Mammary epithelial cell (primary cell): ENCODE measurements at regions of chr6 and their contacts with region 1.

Region 1: DNA sequence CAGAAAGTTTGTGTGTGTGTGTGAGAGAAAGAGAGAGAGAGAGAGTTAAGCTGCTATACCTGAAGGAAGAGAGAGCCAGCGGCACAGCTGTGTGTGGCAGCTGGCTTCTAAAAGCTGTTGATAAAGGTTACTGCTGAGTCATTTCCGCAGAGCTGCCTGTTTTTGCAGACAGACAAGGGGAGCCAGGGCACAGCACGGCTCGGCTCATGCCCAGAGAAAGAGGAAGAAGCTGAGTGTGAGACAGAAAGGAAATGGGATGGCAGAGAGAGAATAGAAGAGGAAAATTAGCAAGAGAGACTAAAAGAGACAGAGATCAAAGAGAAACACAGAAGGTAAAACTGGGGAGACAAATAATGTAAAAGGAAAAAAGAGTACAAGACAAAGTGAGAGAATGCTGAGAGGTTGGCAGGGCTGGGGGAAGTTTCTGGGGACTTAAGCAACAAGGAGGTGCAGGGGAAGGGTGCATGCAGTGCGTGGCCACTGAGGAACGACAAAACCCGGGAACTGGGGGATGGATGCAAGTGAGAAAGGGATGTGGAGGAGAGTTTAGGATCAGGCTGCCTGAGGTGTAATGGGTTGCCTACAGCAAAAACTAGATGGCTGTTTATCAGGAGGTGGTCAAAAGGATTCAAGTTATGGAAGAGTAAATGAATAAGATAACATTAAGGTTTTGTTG is 22.7 kb downstream of the HLA-A start:
- DNase-seq: peak; percentile 84
- H3K4me3 ChIP-seq: peak overlapping the region; percentile 32 to 61 (median 45)
- H3K27ac ChIP-seq: peak overlapping the region; percentile 66
- H3K4me1 ChIP-seq: peaks cover 39% of the 10 kb centered on the region
- H3K27me3 ChIP-seq: no peaks in the 10 kb centered on the region
- CTCF ChIP-seq: no peak

Region 2: DNA sequence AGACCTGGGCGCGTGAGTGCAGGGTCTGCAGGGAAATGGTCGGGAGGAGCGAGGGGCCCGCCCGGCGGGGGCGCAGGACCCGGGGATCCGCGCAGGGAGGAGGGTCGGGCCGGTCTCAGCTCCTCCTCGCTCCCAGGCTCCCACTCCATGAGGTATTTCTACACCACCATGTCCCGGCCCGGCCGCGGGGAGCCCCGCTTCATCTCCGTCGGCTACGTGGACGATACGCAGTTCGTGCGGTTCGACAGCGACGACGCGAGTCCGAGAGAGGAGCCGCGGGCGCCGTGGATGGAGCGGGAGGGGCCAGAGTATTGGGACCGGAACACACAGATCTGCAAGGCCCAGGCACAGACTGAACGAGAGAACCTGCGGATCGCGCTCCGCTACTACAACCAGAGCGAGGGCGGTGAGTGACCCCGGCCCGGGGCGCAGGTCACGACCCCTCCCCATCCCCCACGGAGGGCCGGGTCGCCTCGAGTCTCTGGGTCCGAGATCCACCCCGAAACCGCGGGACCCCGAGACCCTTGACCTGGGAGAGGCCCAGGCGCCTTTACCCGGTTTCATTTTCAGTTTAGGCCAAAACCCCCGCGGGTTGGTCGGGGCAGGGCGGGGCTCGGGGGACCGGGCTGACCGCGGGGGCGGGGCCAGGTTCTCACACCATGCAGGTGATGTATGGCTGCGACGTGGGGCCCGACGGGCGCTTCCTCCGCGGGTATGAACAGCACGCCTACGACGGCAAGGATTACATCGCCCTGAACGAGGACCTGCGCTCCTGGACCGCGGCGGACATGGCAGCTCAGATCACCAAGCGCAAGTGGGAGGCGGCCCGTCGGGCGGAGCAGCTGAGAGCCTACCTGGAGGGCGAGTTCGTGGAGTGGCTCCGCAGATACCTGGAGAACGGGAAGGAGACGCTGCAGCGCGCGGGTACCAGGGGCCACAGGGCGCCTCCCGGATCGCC is 76.9 kb before region 1 on chr6:
- CTCF ChIA-PET with region 1: no interaction called
- dilution Hi-C with region 1: no loop called
- in situ Hi-C with region 1: no loop called
- intact Hi-C with region 1: loop called (anchors 5 kb)
- DNase-seq: peak; percentile 61
- H3K4me3 ChIP-seq: peak overlapping the region; percentile 64 to 71 (median 67)
- H3K27ac ChIP-seq: peak overlapping the region; percentile 89
- H3K4me1 ChIP-seq: peaks cover 7% of the 10 kb centered on the region
- H3K27me3 ChIP-seq: no peaks in the 10 kb centered on the region
- CTCF ChIP-seq: no peak

Region 3: GRCh38 chr6:29916741-29917140 is 48.3 kb before region 1 on chr6:
- CTCF ChIA-PET with region 1: interaction called, 11 read pairs
- dilution Hi-C with region 1: no loop called
- in situ Hi-C with region 1: no loop called
- intact Hi-C with region 1: no loop called
- DNase-seq: no peak
- H3K4me3 ChIP-seq: no peak overlapping the region
- H3K27ac ChIP-seq: no peak overlapping the region
- H3K4me1 ChIP-seq: no peaks in the 10 kb centered on the region
- H3K27me3 ChIP-seq: no peaks in the 10 kb centered on the region
- CTCF ChIP-seq: no peak

Region 4: DNA sequence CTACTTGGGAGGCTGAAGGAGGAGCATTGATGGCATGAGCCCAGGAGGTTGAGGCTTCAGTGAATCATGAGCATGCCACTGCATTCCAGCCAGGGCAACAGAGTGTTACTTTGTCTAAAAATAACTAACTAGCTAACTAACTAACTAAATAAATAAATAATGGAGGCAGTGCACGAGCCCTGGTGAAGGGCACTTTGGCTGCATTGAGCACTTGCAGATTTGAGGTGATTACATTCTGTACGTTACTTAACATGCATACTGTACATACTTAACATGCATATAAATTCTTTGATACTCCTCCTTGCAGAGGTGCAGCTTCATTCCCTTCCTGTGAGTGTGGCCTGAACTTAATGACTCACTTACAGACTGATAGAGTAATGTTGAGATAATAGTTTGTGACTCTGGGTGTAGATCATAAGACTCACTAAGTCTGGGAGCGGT is 12.0 kb before region 1 on chr6:
- CTCF ChIA-PET with region 1: interaction called, 8 read pairs
- dilution Hi-C with region 1: no loop called
- in situ Hi-C with region 1: no loop called
- intact Hi-C with region 1: loop called (anchors 1 kb)
- DNase-seq: peak; percentile 91
- H3K4me3 ChIP-seq: no peak overlapping the region
- H3K27ac ChIP-seq: no peak overlapping the region
- H3K4me1 ChIP-seq: peaks cover 2% of the 10 kb centered on the region
- H3K27me3 ChIP-seq: no peaks in the 10 kb centered on the region
- CTCF ChIP-seq: no peak

Region 5: DNA sequence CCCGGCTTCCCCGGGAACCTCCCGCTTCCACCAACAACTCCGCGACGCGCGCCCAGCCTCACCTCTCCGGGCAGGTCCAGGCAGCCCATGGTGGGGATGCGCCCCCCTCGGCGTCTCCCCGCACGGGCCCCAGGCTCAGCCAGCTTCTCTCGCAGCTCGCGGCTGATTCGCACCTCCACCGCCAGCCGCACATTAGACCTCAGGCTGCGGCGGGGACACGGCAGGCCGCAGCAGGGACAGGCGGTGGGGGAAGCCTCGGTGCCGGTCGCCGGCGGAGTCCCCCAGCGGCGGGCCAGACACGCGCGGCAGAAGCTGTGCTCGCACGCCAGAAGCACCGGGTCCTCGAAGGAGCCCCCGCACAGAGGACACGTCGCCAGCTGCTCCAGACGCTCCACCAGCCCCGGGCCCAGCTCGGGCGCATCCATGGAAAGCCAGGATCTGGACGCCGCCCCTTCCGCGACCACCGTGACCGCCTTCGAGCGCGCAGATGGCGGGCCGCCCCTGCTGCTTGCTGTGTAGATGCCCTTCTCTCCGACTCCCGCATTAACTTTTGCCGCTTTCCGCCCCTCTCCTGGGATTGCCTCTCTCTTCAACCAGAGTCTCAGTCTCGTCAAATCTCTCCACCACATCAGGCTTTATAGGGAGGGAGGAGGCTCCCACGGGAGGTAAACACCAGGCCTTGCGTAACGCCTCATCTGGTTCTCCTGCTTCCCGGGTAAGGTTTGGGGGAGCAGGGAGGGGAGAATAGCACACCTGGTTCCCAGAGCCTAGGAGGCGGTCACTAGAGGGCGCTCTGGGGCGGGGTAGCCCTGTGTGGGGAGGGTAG is 110.3 kb after region 1 on chr6 and contains the start of gene RNF39:
- CTCF ChIA-PET with region 1: no interaction called
- dilution Hi-C with region 1: no loop called
- in situ Hi-C with region 1: no loop called
- intact Hi-C with region 1: loop called (anchors 5 kb)
- DNase-seq: peak; percentile 79
- H3K4me3 ChIP-seq: peak within 1 kb of the TSS; percentile 74 to 77 (median 77)
- H3K27ac ChIP-seq: peak within 1 kb of the TSS; percentile 62
- H3K4me1 ChIP-seq: peaks cover 28% of the 10 kb centered on the region
- H3K27me3 ChIP-seq: peaks cover 9% of the 10 kb centered on the region
- CTCF ChIP-seq: peak in 1 of 2 donors; percentile 63
- total RNA-seq, gene RNF39: 2.5 to 5.4 TPM